Activated CD8-positive, alpha-beta memory T cell treated with anti-CD3 and anti-CD28 coated beads, Interleukin-2, amount 10 ng/mL, durations not matched to agents 7 days and 5 days (primary cell): ENCODE measurements at regions of chr1 and their contacts with region 1.

Region 1: DNA sequence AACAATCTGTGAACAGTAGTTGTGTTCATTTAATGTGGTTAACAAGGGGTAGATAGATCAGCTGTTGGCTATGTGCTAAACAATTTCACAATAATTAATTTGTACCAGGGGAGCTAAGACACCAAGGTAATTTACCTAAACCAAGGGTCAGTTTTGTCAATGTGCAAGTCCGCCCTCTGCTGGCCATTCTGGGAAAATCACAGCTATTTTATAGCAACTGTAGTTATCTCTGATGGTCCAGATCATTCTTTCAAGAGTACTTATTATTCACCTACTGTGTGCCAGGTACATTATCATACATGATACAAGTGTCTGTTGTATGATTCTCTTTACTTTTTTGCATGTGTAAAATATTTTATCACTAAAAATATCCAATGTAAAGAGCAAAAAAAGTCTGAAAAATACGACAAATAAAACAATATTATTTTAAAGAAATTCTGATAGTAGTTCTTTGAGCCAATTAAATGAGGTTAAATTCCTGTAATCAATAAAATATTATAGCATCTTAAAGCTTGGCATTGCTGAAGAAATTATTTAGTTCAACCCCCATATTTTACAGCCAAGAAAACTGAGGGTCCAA is 312.3 kb upstream of the FAM78B start:
- DNase-seq: peak; percentile 67
- ATAC-seq: no peak
- H3K4me3 Mint-ChIP-seq: no peak overlapping the region
- H3K27ac Mint-ChIP-seq: no peak overlapping the region
- H3K4me1 Mint-ChIP-seq: no peaks in the 10 kb centered on the region
- H3K27me3 Mint-ChIP-seq: no peaks in the 10 kb centered on the region

Region 2: DNA sequence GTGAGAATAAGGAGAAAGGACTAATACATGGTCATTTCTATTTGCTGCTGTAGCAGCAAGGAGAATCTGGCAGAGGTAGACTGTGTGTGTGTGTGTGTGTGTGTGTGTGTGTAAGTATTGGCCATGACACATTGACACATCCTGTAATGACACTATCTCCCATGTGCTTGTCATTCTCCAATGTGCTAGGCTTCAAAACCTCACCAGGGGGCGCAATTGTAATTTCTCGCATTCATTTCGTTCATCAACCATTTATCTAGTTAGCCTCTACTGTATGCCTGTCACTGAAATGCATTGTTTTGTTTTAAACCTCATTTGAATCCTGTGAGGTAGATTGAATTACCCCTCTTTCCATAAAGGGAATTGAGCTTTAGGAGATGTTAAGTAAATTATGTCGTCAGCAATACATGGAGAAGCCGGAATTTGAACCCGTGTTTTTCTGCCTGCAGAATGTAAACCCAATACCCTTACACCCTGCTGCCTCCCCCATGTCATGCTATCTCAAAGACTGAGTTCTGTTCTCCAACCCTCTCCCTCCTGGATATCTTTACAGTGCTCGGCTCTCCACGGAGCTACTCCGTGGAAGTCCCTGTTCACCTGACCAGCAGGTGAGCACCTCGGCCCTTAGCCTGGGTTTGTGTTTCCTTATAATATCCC is 550.9 kb before region 1 on chr1:
- CTCF ChIA-PET with region 1: interaction called, 17 read pairs
- DNase-seq: peak; percentile 63
- ATAC-seq: peak; percentile 64
- H3K4me3 Mint-ChIP-seq: no peak overlapping the region
- H3K27ac Mint-ChIP-seq: no peak overlapping the region
- H3K4me1 Mint-ChIP-seq: no peaks in the 10 kb centered on the region
- H3K27me3 Mint-ChIP-seq: peaks cover 3% of the 10 kb centered on the region

Region 3: GRCh38 chr1:166489670-166490436 is 10.7 kb after region 1 on chr1:
- CTCF ChIA-PET with region 1: interaction called, 31 read pairs
- DNase-seq: peak; percentile 70
- ATAC-seq: peak; percentile 82
- H3K4me3 Mint-ChIP-seq: no peak overlapping the region
- H3K27ac Mint-ChIP-seq: no peak overlapping the region
- H3K4me1 Mint-ChIP-seq: peaks cover 5% of the 10 kb centered on the region
- H3K27me3 Mint-ChIP-seq: peaks cover 1% of the 10 kb centered on the region